Motor neuron (in vitro differentiated cells): ENCODE measurements at regions of chr12 and their contacts with region 1.

Region 1: GRCh38 chr12:53324779-53325510 is 3.5 kb upstream of the AAAS start:
- ATAC-seq: peak; percentile 49 to 73 (median 66)
- H3K4me3 ChIP-seq: peak overlapping the region; percentile 25 to 40 (median 39)
- H3K27ac ChIP-seq: peak overlapping the region in 1 of 2 donors; percentile 30
- H3K4me1 ChIP-seq: peaks cover 22 to 24% of the 10 kb centered on the region in 2 donors

Region 2: DNA sequence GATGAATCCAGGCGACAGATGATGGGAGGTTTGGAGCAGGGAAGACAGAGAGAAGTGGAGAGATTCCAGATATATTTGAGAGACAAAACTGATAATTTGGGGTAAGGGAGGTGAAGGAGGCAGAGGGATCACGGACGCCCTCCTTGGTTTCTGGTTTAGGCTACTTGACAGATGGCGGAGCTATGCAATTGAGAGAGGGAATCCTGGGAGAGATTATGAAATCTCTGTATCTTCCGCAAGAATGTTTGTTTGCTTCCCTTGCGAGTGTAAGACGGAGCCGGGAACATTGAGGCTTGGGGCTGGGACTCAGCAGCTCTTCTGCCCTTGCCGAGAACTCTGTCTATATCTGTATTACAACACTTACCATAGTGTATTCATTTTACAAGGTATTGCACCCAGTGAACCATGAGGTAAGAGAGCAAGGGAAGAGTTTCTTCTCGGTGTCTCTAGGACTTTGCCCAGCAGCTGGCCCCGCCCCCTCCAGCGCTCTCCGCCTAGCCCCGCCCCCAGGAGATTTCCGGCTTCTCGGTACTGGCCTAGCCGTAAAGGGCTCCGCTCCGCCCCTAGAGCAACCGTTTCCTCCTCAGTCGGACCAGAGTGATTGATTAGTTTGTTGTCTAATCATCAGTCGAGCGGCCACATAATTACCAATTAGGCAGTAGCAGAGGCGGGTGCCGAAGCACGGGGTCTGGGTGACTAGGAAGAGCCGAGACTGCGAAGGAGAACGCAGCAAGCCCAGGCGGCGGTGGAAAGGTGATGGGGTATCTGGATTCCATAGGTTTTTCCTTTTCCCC is 116.3 kb after region 1 on chr12 and contains the start of gene PRR13:
- in situ Hi-C with region 1: loop called in 1 of 9 experiments (anchors 25 kb)
- ATAC-seq: peak; percentile 92 to 99 (median 98)
- H3K4me3 ChIP-seq: peak within 1 kb of the TSS; percentile 38 to 72 (median 50)
- H3K27ac ChIP-seq: peak within 1 kb of the TSS; percentile 67 to 83
- H3K4me1 ChIP-seq: peaks cover 14% of the 10 kb centered on the region in 2 donors
- total RNA-seq, gene PRR13: 42.8 to 264 (median 79.4) TPM

Region 3: GRCh38 chr12:53500776-53501614 is 176.1 kb after region 1 on chr12 and contains the start of gene TARBP2:
- in situ Hi-C with region 1: loop called in 2 of 9 experiments (anchors 25 kb)
- ATAC-seq: peak; percentile 66 to 82 (median 79)
- H3K4me3 ChIP-seq: peak within 1 kb of the TSS; percentile 56 to 80 (median 62)
- H3K27ac ChIP-seq: peak within 1 kb of the TSS; percentile 98 to 99
- H3K4me1 ChIP-seq: peaks cover 16 to 20% of the 10 kb centered on the region in 2 donors
- total RNA-seq, gene TARBP2: 24.8 to 56.9 (median 44.5) TPM